ENCODE measurements at regions of chr15 and their contacts with region 1.

Region 1: DNA sequence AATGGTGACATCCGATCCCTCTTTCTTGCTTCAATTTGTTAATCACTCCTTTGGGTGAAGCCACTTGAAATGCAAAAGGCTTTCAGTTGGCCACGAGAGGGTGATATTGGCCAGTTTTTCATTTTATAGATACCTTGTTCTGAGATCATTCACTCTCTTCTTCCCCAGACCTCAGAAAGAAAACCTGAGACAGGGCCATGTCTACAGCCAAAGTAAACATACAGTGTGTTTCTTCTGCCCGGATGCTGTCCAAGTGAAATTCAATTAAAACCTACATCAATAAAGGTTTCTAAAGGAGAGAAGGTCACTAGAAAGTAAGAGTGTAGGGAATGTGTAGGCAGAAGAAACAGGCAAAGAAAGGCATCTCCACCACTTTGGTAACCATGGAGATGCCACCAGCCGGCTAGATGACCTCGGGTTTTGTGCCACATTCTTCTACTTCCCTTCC is 39.5 kb upstream of the FMN1 start:
- DNase-seq: peak; percentile 80
- ATAC-seq: peak; percentile 90
- H3K4me3 ChIP-seq: no peak overlapping the region
- H3K27ac ChIP-seq: no peak overlapping the region
- H3K4me1 ChIP-seq: peaks cover 15% of the 10 kb centered on the region
- H3K27me3 ChIP-seq: 0 out of 2 replicates have a peak, but pooled peaks cover 2% of the 10 kb centered on the region
- CTCF ChIP-seq: peak; percentile 92

Region 2: DNA sequence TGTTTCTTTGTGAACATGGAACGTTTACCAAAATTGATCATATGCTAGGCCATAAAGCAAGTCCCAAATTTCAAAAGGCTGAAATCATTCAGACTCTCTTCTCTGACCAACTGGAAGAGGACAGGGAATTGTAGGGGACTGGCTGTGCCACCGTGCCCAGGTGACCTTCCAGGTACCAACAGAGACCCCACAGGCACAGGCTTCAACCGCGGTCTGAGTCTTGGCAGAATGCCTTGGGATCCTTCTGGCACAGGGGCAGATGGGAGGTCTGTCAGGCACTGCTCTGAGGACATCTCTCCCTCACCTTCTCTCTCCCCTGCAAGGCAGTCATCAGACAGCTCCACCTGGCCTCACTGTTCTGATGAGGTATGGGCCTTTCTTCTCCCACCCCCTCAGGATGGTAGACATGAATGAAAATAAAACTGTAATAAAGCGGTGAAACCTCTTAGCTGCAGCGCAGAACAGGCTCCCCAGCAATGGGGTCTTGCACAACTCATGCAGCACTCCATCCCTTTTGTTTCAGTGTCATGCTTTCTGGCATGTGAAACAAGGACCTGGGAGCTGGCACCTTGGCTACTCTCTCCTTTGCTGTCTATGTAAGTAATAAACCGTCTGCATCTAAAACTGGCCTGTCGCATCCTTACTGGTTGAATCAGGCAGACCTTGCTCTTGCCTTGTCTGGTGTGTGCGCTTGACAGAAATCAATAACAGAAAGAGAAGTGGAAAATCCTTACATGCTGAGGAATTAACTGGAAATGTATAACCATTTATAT is 1618.2 kb before region 1 on chr15:
- CTCF ChIA-PET with region 1: no interaction called
- POLR2A ChIA-PET with region 1: no interaction called
- intact Hi-C with region 1: no loop called
- DNase-seq: no peak
- ATAC-seq: no peak
- H3K4me3 ChIP-seq: no peak overlapping the region
- H3K27ac ChIP-seq: no peak overlapping the region
- H3K4me1 ChIP-seq: no peaks in the 10 kb centered on the region
- H3K27me3 ChIP-seq: no peaks in the 10 kb centered on the region
- CTCF ChIP-seq: no peak

Region 3: GRCh38 chr15:33154351-33155166 is 79.5 kb before region 1 on chr15:
- CTCF ChIA-PET with region 1: no interaction called
- POLR2A ChIA-PET with region 1: no interaction called
- intact Hi-C with region 1: no loop called
- DNase-seq: no peak
- ATAC-seq: no peak
- H3K4me3 ChIP-seq: no peak overlapping the region
- H3K27ac ChIP-seq: no peak overlapping the region
- H3K4me1 ChIP-seq: peaks cover 3% of the 10 kb centered on the region
- H3K27me3 ChIP-seq: peaks cover 6% of the 10 kb centered on the region; the same call in 1 of the 2 replicates
- CTCF ChIP-seq: no peak

Region 4: GRCh38 chr15:33262306-33262705 is 28.3 kb after region 1 on chr15:
- CTCF ChIA-PET with region 1: no interaction called
- POLR2A ChIA-PET with region 1: no interaction called
- intact Hi-C with region 1: no loop called
- DNase-seq: no peak
- ATAC-seq: no peak
- H3K4me3 ChIP-seq: no peak overlapping the region
- H3K27ac ChIP-seq: no peak overlapping the region
- H3K4me1 ChIP-seq: no peaks in the 10 kb centered on the region
- H3K27me3 ChIP-seq: peaks cover 30% of the 10 kb centered on the region
- CTCF ChIP-seq: no peak

Region 5: DNA sequence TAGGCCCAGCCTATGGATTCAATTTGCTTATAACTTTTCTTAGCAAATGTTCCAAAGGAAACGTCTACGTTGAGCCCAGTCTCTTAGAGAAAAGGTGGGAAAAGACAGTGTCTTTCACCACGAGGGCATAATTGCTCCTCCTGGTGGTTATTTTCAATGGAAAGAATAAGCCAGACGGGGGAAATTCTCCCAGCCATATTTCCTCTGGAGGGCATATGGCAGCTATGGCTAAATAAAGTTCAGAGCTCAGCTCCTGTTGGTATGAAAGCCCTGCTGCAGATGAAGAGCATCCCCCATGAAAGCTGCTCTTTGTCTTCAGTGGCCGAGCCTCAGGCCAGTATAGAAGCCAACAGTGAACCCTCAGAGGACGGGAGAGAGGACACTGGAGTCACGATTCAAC is 374.7 kb after region 1 on chr15:
- CTCF ChIA-PET with region 1: no interaction called
- POLR2A ChIA-PET with region 1: no interaction called
- intact Hi-C with region 1: loop called (anchors 1 kb)
- DNase-seq: peak; percentile 48
- ATAC-seq: no peak
- H3K4me3 ChIP-seq: no peak overlapping the region
- H3K27ac ChIP-seq: no peak overlapping the region
- H3K4me1 ChIP-seq: no peaks in the 10 kb centered on the region
- H3K27me3 ChIP-seq: peaks cover 59% of the 10 kb centered on the region
- CTCF ChIP-seq: peak; percentile 59

Region 6: GRCh38 chr15:33700695-33701304 is 466.8 kb after region 1 on chr15:
- CTCF ChIA-PET with region 1: no interaction called
- POLR2A ChIA-PET with region 1: no interaction called
- intact Hi-C with region 1: loop called (anchors 1 kb)
- DNase-seq: peak; percentile 84
- ATAC-seq: peak; percentile 97
- H3K4me3 ChIP-seq: no peak overlapping the region
- H3K27ac ChIP-seq: no peak overlapping the region
- H3K4me1 ChIP-seq: no peaks in the 10 kb centered on the region
- H3K27me3 ChIP-seq: peaks cover 30% of the 10 kb centered on the region
- CTCF ChIP-seq: peak; percentile 90

Region 7: GRCh38 chr15:33729653-33730052 is 495.6 kb after region 1 on chr15:
- CTCF ChIA-PET with region 1: no interaction called
- POLR2A ChIA-PET with region 1: no interaction called
- intact Hi-C with region 1: loop called (anchors 1 kb)
- DNase-seq: peak; percentile 79
- ATAC-seq: peak; percentile 71
- H3K4me3 ChIP-seq: no peak overlapping the region
- H3K27ac ChIP-seq: no peak overlapping the region
- H3K4me1 ChIP-seq: no peaks in the 10 kb centered on the region
- H3K27me3 ChIP-seq: no peaks in the 10 kb centered on the region
- CTCF ChIP-seq: peak; percentile 72

Measured in PC-3 (cell line).